PC-3 (cell line): ENCODE measurements at regions of chr5 and their contacts with region 1.

Region 1: DNA sequence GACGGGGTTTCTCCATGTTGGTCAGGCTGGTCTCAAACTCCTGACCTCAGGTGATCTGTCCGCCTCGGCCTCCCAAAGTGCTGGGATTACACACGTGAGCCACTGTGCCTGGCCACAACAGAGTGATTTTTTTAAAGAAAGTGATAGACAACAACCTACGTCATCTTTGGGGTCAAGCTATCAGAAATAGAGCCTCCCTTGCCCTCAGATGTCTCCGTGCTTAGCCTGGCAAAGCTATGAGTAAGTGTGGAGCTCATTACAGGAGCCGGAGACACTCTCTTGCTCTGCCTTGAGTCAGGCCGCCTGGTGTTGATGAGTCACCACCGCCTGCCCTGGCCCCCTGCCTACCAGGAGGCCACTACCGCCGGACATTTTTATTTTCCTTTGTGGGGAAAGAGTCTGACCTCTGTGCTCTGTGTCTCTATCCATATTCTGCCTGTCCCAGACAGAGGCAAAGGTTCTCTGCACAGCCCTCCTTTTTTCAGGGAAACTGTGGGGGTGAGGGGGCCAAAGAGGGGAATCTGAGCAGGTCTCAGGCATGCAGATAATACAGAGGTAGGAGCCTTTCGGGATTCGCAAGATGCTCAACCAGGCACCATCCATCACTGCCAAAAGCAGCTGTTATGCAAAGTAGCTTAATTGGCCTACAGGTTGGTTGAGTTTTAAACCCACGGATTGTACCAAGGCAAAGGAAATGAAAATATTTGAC is 123.7 kb upstream of the CPEB4 start:
- DNase-seq: peak; percentile 95
- ATAC-seq: peak; percentile 93
- H3K4me3 ChIP-seq: no peak overlapping the region
- H3K27ac ChIP-seq: peak overlapping the region; percentile 79
- H3K4me1 ChIP-seq: peaks cover 22% of the 10 kb centered on the region
- H3K27me3 ChIP-seq: no peaks in the 10 kb centered on the region
- CTCF ChIP-seq: no peak

Region 2: DNA sequence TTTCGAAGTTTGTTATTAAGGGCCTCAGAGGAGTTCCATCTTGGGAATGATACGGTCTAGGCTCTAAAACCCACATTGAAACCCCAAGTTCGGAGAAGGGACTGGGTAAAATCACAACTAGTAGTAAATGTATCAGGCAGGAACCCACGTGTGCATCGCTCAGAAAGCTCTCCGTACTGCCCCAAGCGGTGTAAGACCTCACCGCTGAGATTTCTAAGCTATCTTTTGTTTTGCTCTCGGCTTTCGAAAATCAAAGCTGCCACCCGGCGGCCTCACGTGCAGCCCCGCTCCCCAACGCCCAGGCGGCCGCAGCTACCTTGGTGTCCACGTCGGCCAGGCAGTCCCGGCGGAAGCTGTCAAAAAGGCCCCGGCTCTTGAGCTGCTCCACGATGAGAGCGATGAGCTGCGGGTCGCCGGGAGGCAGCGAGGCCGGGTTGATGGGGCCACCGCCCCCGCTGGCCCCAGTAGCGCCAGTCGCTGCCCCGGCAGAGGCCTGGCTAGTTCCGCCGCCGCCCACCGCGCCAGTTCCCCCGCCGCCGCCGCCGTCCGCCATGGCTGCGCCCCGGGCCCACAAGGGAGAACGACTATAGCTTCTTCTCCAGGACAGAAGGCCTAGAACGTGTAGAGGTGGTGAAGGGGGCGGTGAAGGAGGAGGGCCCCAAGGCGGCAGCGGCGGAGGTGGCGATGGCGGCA is 148.4 kb before region 1 on chr5:
- CTCF ChIA-PET with region 1: no interaction called
- POLR2A ChIA-PET with region 1: no interaction called
- intact Hi-C with region 1: loop called (anchors 1 kb)
- DNase-seq: peak; percentile 79
- ATAC-seq: peak; percentile 62
- H3K4me3 ChIP-seq: peak overlapping the region; percentile 90
- H3K27ac ChIP-seq: peak overlapping the region; percentile 71
- H3K4me1 ChIP-seq: peaks cover 36% of the 10 kb centered on the region
- H3K27me3 ChIP-seq: no peaks in the 10 kb centered on the region
- CTCF ChIP-seq: peak; percentile 81

Region 3: DNA sequence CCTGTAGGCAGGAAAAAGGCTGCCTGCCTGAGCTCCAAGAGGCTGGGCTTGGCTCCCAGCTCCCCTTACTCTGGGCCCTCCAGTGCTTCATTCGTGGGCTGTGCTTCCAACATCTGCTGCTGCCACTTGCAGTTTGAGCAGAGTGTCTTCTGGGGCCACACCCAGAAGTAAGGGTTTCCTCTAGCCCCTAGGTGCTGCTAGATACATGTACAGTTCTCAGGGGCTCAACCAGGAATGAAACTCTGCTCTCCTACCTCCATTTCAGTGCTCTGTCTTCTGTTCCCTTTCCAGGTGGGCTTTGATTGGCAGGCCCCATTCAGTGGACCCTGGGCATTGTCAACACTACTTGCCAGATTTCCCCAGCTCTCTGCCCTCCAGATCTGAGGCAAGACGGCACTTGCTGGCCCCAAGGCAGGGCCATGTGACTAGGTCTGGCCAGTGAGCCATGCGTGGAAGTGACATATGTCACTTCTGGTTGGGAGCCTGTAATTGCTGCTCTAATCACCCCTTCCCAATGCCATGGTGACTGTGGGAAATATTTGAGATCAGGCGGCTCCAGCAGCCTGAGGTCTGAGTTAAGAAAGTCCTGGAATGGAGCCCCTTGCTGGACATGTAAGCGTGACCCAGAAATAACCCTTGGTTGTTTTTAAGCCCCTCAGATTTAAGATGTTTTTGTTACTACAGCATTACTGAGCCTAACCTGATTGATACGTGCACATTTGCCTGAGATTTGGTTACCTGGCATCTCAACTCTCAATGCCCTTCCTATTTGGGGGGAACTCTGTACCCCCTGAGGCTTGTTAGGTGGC is 138.6 kb before region 1 on chr5:
- CTCF ChIA-PET with region 1: no interaction called
- POLR2A ChIA-PET with region 1: no interaction called
- intact Hi-C with region 1: loop called (anchors 2 kb)
- DNase-seq: peak; percentile 19
- ATAC-seq: peak; percentile 53
- H3K4me3 ChIP-seq: no peak overlapping the region
- H3K27ac ChIP-seq: no peak overlapping the region
- H3K4me1 ChIP-seq: peaks cover 10% of the 10 kb centered on the region; the same call in 1 of the 2 replicates
- H3K27me3 ChIP-seq: no peaks in the 10 kb centered on the region
- CTCF ChIP-seq: 0 out of 2 replicates have a peak, but pooled peaks have one; percentile 12

Region 4: DNA sequence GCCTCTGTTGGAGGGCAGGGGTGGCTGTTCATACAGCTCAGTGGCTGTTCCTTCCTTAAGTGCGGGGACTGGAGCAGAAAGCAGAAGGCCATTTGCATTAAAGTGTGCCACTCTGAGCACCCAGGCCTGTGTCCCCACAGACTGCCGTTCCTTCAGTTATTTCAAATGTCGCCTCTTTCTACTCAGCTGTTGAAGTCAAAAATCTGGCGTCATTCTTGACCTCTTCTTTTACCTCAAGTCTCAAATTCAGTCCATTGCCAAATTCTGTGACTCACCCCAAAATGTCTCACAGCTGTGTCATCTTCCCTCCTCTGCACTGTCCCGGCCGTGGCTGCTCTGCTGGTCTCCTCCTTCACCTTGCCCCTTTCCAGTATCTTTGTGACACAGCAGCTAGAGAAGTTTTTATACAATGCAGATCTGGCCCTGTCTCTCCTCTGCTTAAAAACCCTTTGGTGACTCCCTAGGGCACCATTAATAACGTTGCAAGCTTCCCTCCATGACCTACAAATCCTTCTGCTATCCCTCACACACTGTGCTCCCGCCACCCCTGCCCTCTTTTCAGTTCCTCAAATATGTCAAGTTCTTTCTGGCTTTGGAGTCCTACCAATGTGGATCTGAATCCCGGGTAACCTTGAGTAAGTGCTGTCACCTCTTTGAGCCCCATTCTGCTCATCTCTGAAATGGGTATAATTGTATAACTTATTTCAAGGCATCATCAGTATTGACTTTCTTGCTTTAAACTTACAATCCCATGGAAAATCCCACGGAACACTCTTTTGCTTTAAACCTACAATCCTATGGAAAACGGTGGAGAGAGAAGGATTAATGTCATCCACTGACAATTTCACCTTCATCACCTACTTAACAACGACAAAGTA is 49.7 kb before region 1 on chr5:
- CTCF ChIA-PET with region 1: no interaction called
- POLR2A ChIA-PET with region 1: no interaction called
- intact Hi-C with region 1: loop called (anchors 5 kb)
- DNase-seq: peak; percentile 97
- ATAC-seq: peak; percentile 93
- H3K4me3 ChIP-seq: no peak overlapping the region
- H3K27ac ChIP-seq: peak overlapping the region; percentile 58
- H3K4me1 ChIP-seq: peaks cover 31% of the 10 kb centered on the region
- H3K27me3 ChIP-seq: no peaks in the 10 kb centered on the region
- CTCF ChIP-seq: no peak